Sciatic nerve (tissue), 2 donors: ENCODE measurements at regions of chr4 and their contacts with region 1.

Region 1: GRCh38 chr4:1834047-1834775 is 21.7 kb downstream of the LETM1 start:
- DNase-seq: no peak
- ATAC-seq: no peak

Region 2: GRCh38 chr4:1183985-1184773 is 650.0 kb before region 1 on chr4:
- intact Hi-C with region 1: loop called (anchors 10 kb)
- DNase-seq: peak; percentile 31
- ATAC-seq: peak; percentile 86

Region 3: GRCh38 chr4:1856042-1856788 is 22.0 kb after region 1 on chr4 and contains the start of gene LETM1:
- intact Hi-C with region 1: no loop called
- DNase-seq: peak; percentile 96
- ATAC-seq: peak; percentile 98
- total RNA-seq, gene LETM1: 37.9 TPM